Naive thymus-derived CD4-positive, alpha-beta T cell (primary cell): ENCODE measurements at regions of chr19 and their contacts with region 1.

Region 1: GRCh38 chr19:18521885-18522624 is at the start of gene ELL:
- DNase-seq: peak; percentile 99 to 100 (median 100)
- ATAC-seq: peak; percentile 92
- H3K4me3 ChIP-seq: peak within 1 kb of the TSS; percentile 89
- H3K4me3 Mint-ChIP-seq: peak within 1 kb of the TSS; percentile 87 to 99 (median 94)
- H3K27ac ChIP-seq: peak within 1 kb of the TSS; percentile 94
- H3K27ac Mint-ChIP-seq: peak within 1 kb of the TSS; percentile 89 to 98 (median 95)
- H3K4me1 ChIP-seq: peaks cover 5 to 10% of the 10 kb centered on the region in 2 donors
- H3K4me1 Mint-ChIP-seq: peaks cover 0 to 24% (median 17%) of the 10 kb centered on the region in 7 donors
- H3K27me3 ChIP-seq: no peaks in the 10 kb centered on the region
- H3K27me3 Mint-ChIP-seq: no peaks in the 10 kb centered on the region
- total RNA-seq, gene ELL: 18.9 to 70.4 (median 25.0) TPM

Region 2: DNA sequence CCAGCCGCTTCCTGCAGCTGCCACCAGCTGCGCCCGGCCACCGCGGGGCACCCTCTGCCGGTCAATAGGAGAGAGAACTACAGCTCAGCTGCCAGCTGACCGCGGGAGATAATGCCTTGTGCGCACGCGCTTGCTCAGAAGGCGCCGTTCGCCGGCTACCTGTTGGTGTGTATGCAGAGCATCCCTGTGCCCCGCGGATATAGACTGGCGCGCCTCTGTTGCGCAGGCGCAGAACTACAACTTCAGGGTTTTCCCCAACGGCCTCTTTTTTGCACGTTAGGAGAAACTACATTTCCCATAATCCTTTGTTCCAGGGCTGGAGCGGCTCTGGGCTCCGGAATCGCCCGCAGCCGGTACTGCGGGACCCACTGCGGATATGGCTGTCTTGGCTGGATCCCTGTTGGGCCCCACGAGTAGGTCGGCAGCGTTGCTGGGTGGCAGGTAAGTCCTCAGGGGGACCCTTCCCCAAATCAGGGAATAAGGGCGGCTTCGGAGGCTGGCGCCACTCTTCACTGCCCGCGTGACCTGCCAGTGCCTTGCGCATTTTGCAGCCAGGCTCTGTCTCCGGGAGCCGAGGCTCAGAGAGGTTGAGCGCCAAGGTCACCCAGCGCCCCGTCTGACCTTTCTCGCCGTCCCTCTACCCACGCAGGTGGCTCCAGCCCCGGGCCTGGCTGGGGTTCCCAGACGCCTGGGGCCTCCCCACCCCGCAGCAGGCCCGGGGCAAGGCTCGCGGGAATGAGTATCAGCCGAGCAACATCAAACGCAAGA is 1216.4 kb before region 1 on chr19 and contains the start of gene MRPL34:
- CTCF ChIA-PET with region 1: no interaction called
- POLR2A ChIA-PET with region 1: no interaction called
- intact Hi-C with region 1: loop called in 1 of 2 experiments (anchors 10 kb)
- DNase-seq: peak; percentile 81 to 96 (median 93)
- ATAC-seq: peak; percentile 65
- H3K4me3 ChIP-seq: peak within 1 kb of the TSS; percentile 93
- H3K4me3 Mint-ChIP-seq: peak within 1 kb of the TSS; percentile 82 to 94 (median 90)
- H3K27ac ChIP-seq: peak within 1 kb of the TSS; percentile 81
- H3K27ac Mint-ChIP-seq: peak within 1 kb of the TSS; percentile 82 to 93 (median 90)
- H3K4me1 ChIP-seq: peaks cover 22 to 32% of the 10 kb centered on the region in 2 donors
- H3K4me1 Mint-ChIP-seq: peaks cover 28 to 64% (median 57%) of the 10 kb centered on the region in 7 donors
- H3K27me3 ChIP-seq: no peaks in the 10 kb centered on the region
- H3K27me3 Mint-ChIP-seq: no peaks in the 10 kb centered on the region
- total RNA-seq, gene MRPL34: 37.0 to 76.0 (median 73.3) TPM

Region 3: GRCh38 chr19:17985037-17985818 is 536.8 kb before region 1 on chr19:
- CTCF ChIA-PET with region 1: no interaction called
- POLR2A ChIA-PET with region 1: no interaction called
- intact Hi-C with region 1: no loop called
- DNase-seq: no peak
- ATAC-seq: no peak
- H3K4me3 ChIP-seq: no peak overlapping the region
- H3K4me3 Mint-ChIP-seq: no peak overlapping the region
- H3K27ac ChIP-seq: no peak overlapping the region
- H3K27ac Mint-ChIP-seq: peak overlapping the region in 1 of 9 donors; percentile 41
- H3K4me1 ChIP-seq: no peaks in the 10 kb centered on the region
- H3K4me1 Mint-ChIP-seq: peaks cover 0 to 7% (median 0%) of the 10 kb centered on the region in 7 donors
- H3K27me3 ChIP-seq: no peaks in the 10 kb centered on the region
- H3K27me3 Mint-ChIP-seq: peaks cover 4 to 11% (median 5%) of the 10 kb centered on the region in 5 donors

Region 4: GRCh38 chr19:18203863-18204393 is 318.1 kb before region 1 on chr19 and contains the start of gene RAB3A:
- CTCF ChIA-PET with region 1: no interaction called
- POLR2A ChIA-PET with region 1: no interaction called
- intact Hi-C with region 1: loop called in 1 of 2 experiments (anchors 1 kb)
- DNase-seq: peak; percentile 95 to 100 (median 99)
- ATAC-seq: peak; percentile 95
- H3K4me3 ChIP-seq: peak within 1 kb of the TSS; percentile 90
- H3K4me3 Mint-ChIP-seq: peak within 1 kb of the TSS; percentile 83 to 98 (median 96)
- H3K27ac ChIP-seq: peak within 1 kb of the TSS; percentile 85
- H3K27ac Mint-ChIP-seq: peak within 1 kb of the TSS; percentile 87 to 99 (median 97)
- H3K4me1 ChIP-seq: peaks cover 15 to 16% of the 10 kb centered on the region in 2 donors
- H3K4me1 Mint-ChIP-seq: peaks cover 11 to 26% (median 22%) of the 10 kb centered on the region in 7 donors
- H3K27me3 ChIP-seq: no peaks in the 10 kb centered on the region
- H3K27me3 Mint-ChIP-seq: peaks cover 0 to 8% (median 0%) of the 10 kb centered on the region in 5 donors
- total RNA-seq, gene RAB3A: 5.7 to 16.7 (median 8.8) TPM

Region 5: DNA sequence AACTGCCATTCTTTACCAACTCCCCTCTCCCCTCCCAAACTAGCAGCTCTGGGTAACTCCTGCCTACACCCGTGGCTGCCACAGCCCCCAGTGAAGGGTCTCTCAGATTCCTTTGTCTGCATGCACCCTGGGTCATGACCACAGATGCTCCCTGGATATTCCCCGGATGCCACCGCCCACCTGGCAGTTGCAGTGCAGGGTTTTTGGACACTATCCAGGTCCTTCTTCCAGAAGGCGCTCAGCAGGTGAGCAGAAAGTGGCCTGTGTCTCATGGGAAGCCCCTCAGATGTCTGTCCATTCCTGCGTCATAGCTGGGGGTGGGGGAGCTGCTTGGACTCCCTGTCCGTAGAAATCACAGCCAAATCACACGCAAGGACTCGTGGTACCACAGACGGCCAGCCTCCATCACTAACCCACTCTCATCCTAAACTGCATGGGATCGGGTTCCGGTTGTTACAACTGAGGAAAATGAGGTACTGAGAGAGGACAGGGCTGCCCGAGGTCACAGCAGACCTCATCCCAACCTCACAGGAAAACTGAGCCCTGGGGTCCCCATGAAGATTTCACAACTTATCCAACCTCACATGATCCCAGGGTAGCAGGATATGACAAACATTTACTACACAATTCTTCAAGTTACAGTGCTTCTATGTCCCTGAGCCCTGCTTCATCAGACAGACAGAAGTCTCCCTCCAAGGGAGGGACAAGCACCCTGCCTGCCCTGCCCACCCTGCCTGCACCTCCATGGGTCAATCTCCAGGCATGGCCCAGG is 38.8 kb before region 1 on chr19:
- CTCF ChIA-PET with region 1: no interaction called
- POLR2A ChIA-PET with region 1: no interaction called
- intact Hi-C with region 1: no loop called
- DNase-seq: no peak
- ATAC-seq: no peak
- H3K4me3 ChIP-seq: no peak overlapping the region
- H3K4me3 Mint-ChIP-seq: peak overlapping the region in 1 of 10 donors; percentile 2
- H3K27ac ChIP-seq: no peak overlapping the region
- H3K27ac Mint-ChIP-seq: peak overlapping the region in 1 of 9 donors; percentile 28
- H3K4me1 ChIP-seq: peaks cover 15 to 50% of the 10 kb centered on the region in 2 donors
- H3K4me1 Mint-ChIP-seq: peaks cover 60 to 82% (median 71%) of the 10 kb centered on the region in 7 donors
- H3K27me3 ChIP-seq: no peaks in the 10 kb centered on the region
- H3K27me3 Mint-ChIP-seq: no peaks in the 10 kb centered on the region

Region 6: DNA sequence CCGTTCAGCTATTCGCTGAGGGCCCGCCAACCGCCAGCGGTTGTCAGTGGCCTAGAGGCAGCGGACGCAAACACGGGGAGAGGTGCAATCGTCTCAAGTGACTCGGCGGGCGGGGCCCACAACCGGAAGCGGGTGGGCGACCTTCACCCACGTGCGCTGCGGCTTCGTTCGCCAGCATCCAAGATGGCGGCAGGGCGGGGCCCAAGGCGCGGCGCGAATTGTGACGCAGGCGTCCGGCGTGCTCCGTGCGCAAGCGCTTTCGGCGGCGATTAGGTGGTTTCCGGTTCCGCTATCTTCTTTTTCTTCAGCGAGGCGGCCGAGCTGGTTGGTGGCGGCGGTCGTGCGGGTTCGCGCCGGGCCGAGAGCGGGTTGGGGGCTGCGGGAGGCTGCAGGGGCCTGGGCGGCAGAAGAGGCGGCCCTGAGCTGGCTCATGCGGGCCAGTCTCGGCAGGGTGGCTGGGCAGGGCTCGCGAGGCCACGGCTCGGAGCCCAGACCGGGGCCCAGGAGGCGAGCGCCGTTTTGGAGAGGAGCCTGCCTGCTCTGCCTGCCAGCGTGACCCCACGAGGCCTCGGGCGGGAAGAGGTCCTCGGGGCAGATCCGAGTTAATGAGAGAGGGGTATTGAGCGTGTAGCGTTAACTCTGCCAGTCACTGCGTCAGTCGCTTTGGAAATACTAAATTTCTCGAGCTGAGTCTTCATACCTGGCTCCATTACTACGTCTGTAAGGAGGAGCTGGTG is 49.7 kb after region 1 on chr19 and contains the start of gene UBA52:
- CTCF ChIA-PET with region 1: interaction called, 6 read pairs
- POLR2A ChIA-PET with region 1: interaction called, 30 read pairs
- intact Hi-C with region 1: loop called (anchors 1 kb)
- DNase-seq: peak; percentile 97 to 99 (median 98)
- ATAC-seq: peak; percentile 97
- H3K4me3 ChIP-seq: peak within 1 kb of the TSS; percentile 91
- H3K4me3 Mint-ChIP-seq: peak within 1 kb of the TSS; percentile 83 to 97 (median 91)
- H3K27ac ChIP-seq: peak within 1 kb of the TSS; percentile 94
- H3K27ac Mint-ChIP-seq: peak within 1 kb of the TSS; percentile 92 to 99 (median 96)
- H3K4me1 ChIP-seq: peaks cover 17% of the 10 kb centered on the region in 2 donors
- H3K4me1 Mint-ChIP-seq: peaks cover 14 to 38% (median 26%) of the 10 kb centered on the region in 7 donors
- H3K27me3 ChIP-seq: no peaks in the 10 kb centered on the region
- H3K27me3 Mint-ChIP-seq: peaks cover 0 to 2% (median 0%) of the 10 kb centered on the region in 5 donors
- total RNA-seq, gene UBA52: 1,563 to 2,429 (median 2,196) TPM

Region 7: GRCh38 chr19:18700501-18701249 is 178.6 kb after region 1 on chr19:
- CTCF ChIA-PET with region 1: no interaction called
- POLR2A ChIA-PET with region 1: interaction called, 4 read pairs
- intact Hi-C with region 1: loop called in 1 of 2 experiments (anchors 1 kb)
- DNase-seq: peak; percentile 50 to 76 (median 68)
- ATAC-seq: peak; percentile 97
- H3K4me3 ChIP-seq: peak overlapping the region; percentile 71
- H3K4me3 Mint-ChIP-seq: peak overlapping the region; percentile 84 to 95 (median 91)
- H3K27ac ChIP-seq: peak overlapping the region; percentile 76
- H3K27ac Mint-ChIP-seq: peak overlapping the region; percentile 39 to 98 (median 94)
- H3K4me1 ChIP-seq: peaks cover 24 to 38% of the 10 kb centered on the region in 2 donors
- H3K4me1 Mint-ChIP-seq: peaks cover 15 to 52% (median 36%) of the 10 kb centered on the region in 7 donors
- H3K27me3 ChIP-seq: no peaks in the 10 kb centered on the region
- H3K27me3 Mint-ChIP-seq: peaks cover 0 to 4% (median 0%) of the 10 kb centered on the region in 5 donors

Region 8: DNA sequence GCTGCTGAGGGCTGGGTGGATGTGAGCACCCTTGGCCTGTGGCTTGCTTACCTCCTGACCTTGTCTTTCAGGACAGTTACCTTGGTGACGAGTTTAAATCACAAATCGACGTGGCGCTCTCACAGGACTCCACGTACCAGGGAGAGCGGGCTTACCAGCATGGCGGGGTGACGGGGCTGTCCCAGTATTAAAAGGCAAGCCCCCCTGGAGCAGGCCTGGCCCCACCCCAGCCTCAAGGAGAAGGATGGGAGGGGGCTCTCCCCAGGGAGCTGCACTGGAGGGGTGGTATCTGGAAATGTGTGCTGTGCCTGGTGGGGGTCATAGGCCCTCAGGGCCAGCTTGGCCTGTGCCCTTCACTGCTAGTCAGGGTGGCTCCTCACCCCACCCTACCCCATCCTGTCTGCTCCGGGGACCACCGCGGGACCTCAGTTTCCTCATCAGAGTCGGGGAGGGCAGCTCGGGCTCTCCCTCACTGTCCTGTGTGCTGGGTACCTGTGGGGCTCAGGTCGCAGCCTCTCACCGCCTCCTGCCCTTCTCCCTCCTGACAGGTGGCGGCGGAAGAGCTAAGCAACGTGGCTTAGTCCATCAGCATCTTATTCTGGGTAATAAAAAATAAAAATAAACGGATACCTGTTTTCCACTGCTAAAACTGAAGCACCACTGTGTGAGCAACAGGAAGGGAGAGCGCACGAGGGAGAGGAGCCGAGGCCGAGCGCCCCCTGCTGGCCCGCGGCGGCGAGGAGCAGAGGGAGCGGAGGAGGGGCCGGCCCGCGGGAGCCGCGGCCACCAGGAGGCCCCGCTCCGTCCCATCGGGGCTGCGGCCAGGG is 344.1 kb after region 1 on chr19:
- CTCF ChIA-PET with region 1: interaction called, 6 read pairs
- POLR2A ChIA-PET with region 1: no interaction called
- intact Hi-C with region 1: loop called in 1 of 2 experiments (anchors 1 kb)
- DNase-seq: peak; percentile 36 to 78 (median 60)
- ATAC-seq: peak; percentile 89
- H3K4me3 ChIP-seq: no peak overlapping the region
- H3K4me3 Mint-ChIP-seq: no peak overlapping the region
- H3K27ac ChIP-seq: no peak overlapping the region
- H3K27ac Mint-ChIP-seq: peak overlapping the region in 1 of 9 donors; percentile 69
- H3K4me1 ChIP-seq: no peaks in the 10 kb centered on the region
- H3K4me1 Mint-ChIP-seq: peaks cover 0 to 8% (median 7%) of the 10 kb centered on the region in 7 donors
- H3K27me3 ChIP-seq: no peaks in the 10 kb centered on the region
- H3K27me3 Mint-ChIP-seq: peaks cover 0 to 6% (median 4%) of the 10 kb centered on the region in 5 donors

Region 9: GRCh38 chr19:19138169-19138981 is 616.3 kb after region 1 on chr19 and contains the start of gene TMEM161A:
- CTCF ChIA-PET with region 1: no interaction called
- POLR2A ChIA-PET with region 1: no interaction called
- intact Hi-C with region 1: loop called (anchors 5 kb)
- DNase-seq: peak; percentile 84 to 96 (median 93)
- ATAC-seq: peak; percentile 100
- H3K4me3 ChIP-seq: peak within 1 kb of the TSS; percentile 84
- H3K4me3 Mint-ChIP-seq: peak within 1 kb of the TSS; percentile 83 to 100 (median 98)
- H3K27ac ChIP-seq: peak within 1 kb of the TSS; percentile 90
- H3K27ac Mint-ChIP-seq: peak within 1 kb of the TSS; percentile 84 to 97 (median 94)
- H3K4me1 ChIP-seq: peaks cover 8 to 9% of the 10 kb centered on the region in 2 donors
- H3K4me1 Mint-ChIP-seq: peaks cover 20 to 41% (median 29%) of the 10 kb centered on the region in 7 donors
- H3K27me3 ChIP-seq: no peaks in the 10 kb centered on the region
- H3K27me3 Mint-ChIP-seq: no peaks in the 10 kb centered on the region
- total RNA-seq, gene TMEM161A: 15.8 to 32.7 (median 23.5) TPM